ENCODE measurements at regions of chr6 and their contacts with region 1.

Region 1: GRCh38 chr6:17599885-17600526 is at the start of gene FAM8A1:
- DNase-seq: peak; percentile 91
- ATAC-seq: peak; percentile 91
- H3K4me3 ChIP-seq: peak within 1 kb of the TSS; percentile 92 to 99 (median 98)
- H3K27ac ChIP-seq: peak within 1 kb of the TSS; percentile 93
- H3K4me1 ChIP-seq: peaks cover 34% of the 10 kb centered on the region
- H3K27me3 ChIP-seq: no peaks in the 10 kb centered on the region; a peak in 1 of 5 replicates
- CTCF ChIP-seq: peak; percentile 74
- EP300 ChIP-seq: peak in 1 of 2 experiments; percentile 62; a peak in 2 of 4 replicates
- POLR2A ChIP-seq: peak; percentile 88 to 95
- RAD21 ChIP-seq: peak; percentile 10; the same call in 1 of the 2 replicates
- total RNA-seq, gene FAM8A1: 30.5 and 30.6 TPM in 2 replicates

Region 2: DNA sequence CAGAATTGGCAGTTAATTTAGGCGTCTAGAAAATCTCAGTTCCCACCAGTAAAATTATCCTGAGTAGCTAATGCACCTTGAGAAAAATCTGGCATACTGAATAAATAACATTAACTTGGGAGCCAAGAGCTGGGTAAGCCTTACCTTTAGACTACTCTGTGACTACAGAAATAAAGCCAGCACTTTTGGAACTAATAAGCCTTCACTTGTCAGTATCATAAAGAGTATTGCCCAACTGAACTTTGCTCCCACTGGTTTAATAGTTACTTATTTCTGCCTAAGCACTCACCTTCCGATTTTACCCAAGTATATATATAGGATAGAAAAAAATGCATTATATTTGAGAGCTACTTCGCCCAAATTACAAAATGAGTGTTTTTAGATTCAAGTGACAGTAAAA is 10.8 kb after region 1 on chr6:
- CTCF ChIA-PET with region 1: no interaction called
- POLR2A ChIA-PET with region 1: interaction called, 12 read pairs
- in situ Hi-C with region 1: no loop called
- intact Hi-C with region 1: no loop called
- DNase-seq: peak; percentile 79
- ATAC-seq: peak; percentile 86
- H3K4me3 ChIP-seq: no peak overlapping the region; a peak in 1 of 6 replicates
- H3K27ac ChIP-seq: peak overlapping the region; percentile 15
- H3K4me1 ChIP-seq: peaks cover 31% of the 10 kb centered on the region
- H3K27me3 ChIP-seq: no peaks in the 10 kb centered on the region
- CTCF ChIP-seq: no peak
- EP300 ChIP-seq: peak in 1 of 2 experiments; percentile 55; a peak in 1 of 4 replicates
- POLR2A ChIP-seq: peak in 1 of 2 experiments; percentile 40; a peak in 1 of 4 replicates
- RAD21 ChIP-seq: no peak

Region 3: DNA sequence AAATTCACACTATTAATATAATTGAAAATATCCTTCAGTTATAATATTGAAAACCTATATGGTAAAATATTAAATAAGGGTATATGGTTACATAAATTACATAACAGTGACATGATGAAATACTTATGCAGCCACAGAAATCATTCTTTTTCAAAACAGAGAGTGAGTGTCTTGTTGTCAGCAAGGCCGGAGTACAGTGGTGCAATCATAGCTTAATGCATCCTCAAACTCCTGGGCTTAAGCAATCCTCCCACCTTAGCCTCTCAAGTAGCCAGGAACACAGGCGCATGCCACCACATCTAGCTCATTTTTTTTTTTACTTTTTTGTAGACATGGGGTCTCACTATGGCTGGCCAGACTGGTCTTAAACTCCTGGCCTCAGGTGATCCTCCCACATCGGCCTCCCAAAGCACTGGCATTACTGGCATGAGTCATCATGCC is 40.5 kb after region 1 on chr6:
- CTCF ChIA-PET with region 1: no interaction called
- POLR2A ChIA-PET with region 1: no interaction called
- in situ Hi-C with region 1: no loop called
- intact Hi-C with region 1: loop called (anchors 5 kb)
- DNase-seq: no peak
- ATAC-seq: no peak
- H3K4me3 ChIP-seq: no peak overlapping the region
- H3K27ac ChIP-seq: no peak overlapping the region
- H3K4me1 ChIP-seq: no peaks in the 10 kb centered on the region
- H3K27me3 ChIP-seq: no peaks in the 10 kb centered on the region
- CTCF ChIP-seq: no peak
- EP300 ChIP-seq: no peak
- POLR2A ChIP-seq: no peak
- RAD21 ChIP-seq: no peak

Region 4: GRCh38 chr6:17706580-17707370 is 106.8 kb after region 1 on chr6 and contains the start of gene NUP153:
- CTCF ChIA-PET with region 1: no interaction called
- POLR2A ChIA-PET with region 1: interaction called, 8 read pairs
- in situ Hi-C with region 1: no loop called
- intact Hi-C with region 1: loop called (anchors 5 kb)
- DNase-seq: peak; percentile 98
- ATAC-seq: peak; percentile 85
- H3K4me3 ChIP-seq: peak within 1 kb of the TSS; percentile 79 to 86 (median 84)
- H3K27ac ChIP-seq: peak within 1 kb of the TSS; percentile 94
- H3K4me1 ChIP-seq: peaks cover 50% of the 10 kb centered on the region
- H3K27me3 ChIP-seq: no peaks in the 10 kb centered on the region; a peak in 1 of 5 replicates
- CTCF ChIP-seq: peak; percentile 43
- EP300 ChIP-seq: peak; percentile 62 to 85
- POLR2A ChIP-seq: peak; percentile 92 to 96
- RAD21 ChIP-seq: no peak; the same call in none of the 2 replicates
- total RNA-seq, gene NUP153: 55.2 and 93.0 TPM in 2 replicates

Measured in HepG2 (cell line).